ENCODE measurements at regions of chr6 and their contacts with region 1.

Region 1: GRCh38 chr6:45714741-45715507 is 300.7 kb downstream of the CLIC5 start:
- DNase-seq: no peak
- H3K4me3 ChIP-seq: no peak overlapping the region
- H3K27ac ChIP-seq: no peak overlapping the region
- H3K4me1 ChIP-seq: peaks cover 4% of the 10 kb centered on the region
- H3K27me3 ChIP-seq: peaks cover 18% of the 10 kb centered on the region
- CTCF ChIP-seq: peak; percentile 87

Region 2: GRCh38 chr6:44655412-44656342 is 1059.2 kb before region 1 on chr6:
- intact Hi-C with region 1: loop called (anchors 5 kb)
- DNase-seq: peak; percentile 66
- H3K4me3 ChIP-seq: no peak overlapping the region
- H3K27ac ChIP-seq: no peak overlapping the region
- H3K4me1 ChIP-seq: no peaks in the 10 kb centered on the region
- H3K27me3 ChIP-seq: peaks cover 42% of the 10 kb centered on the region
- CTCF ChIP-seq: peak; percentile 92

Region 3: GRCh38 chr6:45566882-45567281 is 148.0 kb before region 1 on chr6:
- intact Hi-C with region 1: no loop called
- DNase-seq: no peak
- H3K4me3 ChIP-seq: no peak overlapping the region
- H3K27ac ChIP-seq: no peak overlapping the region
- H3K4me1 ChIP-seq: peaks cover 31% of the 10 kb centered on the region
- H3K27me3 ChIP-seq: no peaks in the 10 kb centered on the region
- CTCF ChIP-seq: no peak

Region 4: DNA sequence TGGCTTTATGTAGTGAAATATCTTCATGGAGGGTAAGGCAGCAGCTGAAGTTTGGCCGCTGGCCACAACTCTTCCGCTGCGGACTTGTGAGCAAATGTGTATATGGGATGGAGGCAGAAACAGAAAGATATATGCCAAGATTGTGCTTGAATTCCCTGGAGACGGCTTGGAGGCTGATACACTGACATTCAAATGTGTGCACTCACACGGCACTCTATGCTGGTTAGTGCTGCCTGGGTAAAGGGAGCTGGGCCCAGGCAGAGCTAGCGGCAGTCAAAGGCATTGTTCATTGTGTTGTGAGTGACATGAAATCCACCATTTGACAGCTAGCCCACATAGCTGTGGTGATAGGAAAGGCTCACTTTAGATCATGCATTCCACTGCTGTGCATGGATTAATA is 98.0 kb after region 1 on chr6:
- intact Hi-C with region 1: no loop called
- DNase-seq: no peak
- H3K4me3 ChIP-seq: no peak overlapping the region
- H3K27ac ChIP-seq: no peak overlapping the region
- H3K4me1 ChIP-seq: peaks cover 10% of the 10 kb centered on the region
- H3K27me3 ChIP-seq: peaks cover 6% of the 10 kb centered on the region
- CTCF ChIP-seq: no peak